ENCODE measurements at regions of chr5 and their contacts with region 1.

Region 1: GRCh38 chr5:54415896-54416601 is 39.5 kb upstream of the HSPB3 start:
- DNase-seq: peak; percentile 75
- H3K4me3 ChIP-seq: no peak overlapping the region
- CTCF ChIP-seq: no peak

Region 2: DNA sequence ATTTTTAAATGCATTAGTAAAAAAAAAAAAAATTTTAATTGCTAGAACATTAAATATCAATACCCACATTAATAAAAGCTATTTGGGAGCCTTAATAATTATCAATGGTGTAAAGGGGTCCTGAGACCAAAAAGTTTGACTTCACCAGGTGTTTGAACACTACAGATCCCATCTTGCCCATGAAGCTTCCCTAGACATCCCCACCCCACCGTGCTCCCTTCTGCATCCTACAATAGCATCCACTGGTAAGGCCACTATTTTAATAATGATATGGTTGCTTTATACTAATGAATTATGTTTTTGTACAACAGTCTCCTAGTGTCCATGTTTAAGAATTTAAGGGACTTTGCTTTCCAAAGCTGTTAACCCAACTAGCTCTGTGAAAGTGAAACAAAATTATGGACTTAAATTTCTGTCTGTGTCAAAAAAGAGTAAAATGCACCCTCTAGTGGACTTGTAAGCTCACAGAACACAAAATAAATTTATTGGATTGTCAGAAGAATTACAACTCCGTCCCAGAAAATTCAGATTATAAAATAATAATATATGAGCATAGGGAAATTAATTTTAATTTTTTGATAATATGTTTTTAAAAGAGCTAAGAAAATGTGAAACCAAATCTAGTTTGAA is 181.6 kb before region 1 on chr5:
- CTCF ChIA-PET with region 1: interaction called, 16 read pairs
- POLR2A ChIA-PET with region 1: no interaction called
- DNase-seq: peak; percentile 29
- H3K4me3 ChIP-seq: no peak overlapping the region
- CTCF ChIP-seq: peak; percentile 42

Region 3: GRCh38 chr5:54249210-54250028 is 166.6 kb before region 1 on chr5:
- CTCF ChIA-PET with region 1: interaction called, 62 read pairs
- POLR2A ChIA-PET with region 1: no interaction called
- DNase-seq: no peak
- H3K4me3 ChIP-seq: no peak overlapping the region
- CTCF ChIP-seq: no peak

Region 4: GRCh38 chr5:54310433-54311175 is 105.4 kb before region 1 on chr5 and contains the start of gene ARL15:
- CTCF ChIA-PET with region 1: interaction called, 15 read pairs
- POLR2A ChIA-PET with region 1: interaction called, 12 read pairs
- DNase-seq: peak; percentile 73
- H3K4me3 ChIP-seq: peak within 1 kb of the TSS; percentile 83
- CTCF ChIP-seq: no peak

Region 5: GRCh38 chr5:54443270-54443669 is 27.2 kb after region 1 on chr5:
- CTCF ChIA-PET with region 1: interaction called, 11 read pairs
- POLR2A ChIA-PET with region 1: no interaction called
- DNase-seq: no peak
- H3K4me3 ChIP-seq: no peak overlapping the region
- CTCF ChIP-seq: peak; percentile 35